B cell (primary cell): ENCODE measurements at regions of chr6 and their contacts with region 1.

Region 1: DNA sequence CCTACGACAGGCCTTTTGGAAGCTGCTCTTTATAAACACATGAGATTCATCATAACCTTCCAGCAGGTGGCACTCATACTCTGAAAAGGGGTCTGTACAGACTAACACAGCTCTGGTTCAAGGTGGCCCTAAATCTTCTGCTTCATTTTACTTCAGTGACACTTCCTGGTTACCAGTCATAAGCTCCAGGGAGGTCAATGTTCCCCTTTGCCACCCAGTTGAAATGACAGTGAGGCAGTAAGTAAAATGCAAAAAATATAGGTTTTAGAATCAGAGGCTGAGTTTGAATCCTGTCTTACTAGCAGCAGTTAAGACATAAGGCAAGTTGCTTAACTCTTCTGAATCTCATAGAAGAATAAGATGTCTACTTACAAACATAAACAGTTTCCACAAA is 132.8 kb downstream of the CDK19 start:
- DNase-seq: peak; percentile 89
- ATAC-seq: peak; percentile 97
- H3K4me3 ChIP-seq: no peak overlapping the region
- H3K4me3 Mint-ChIP-seq: no peak overlapping the region
- H3K27ac ChIP-seq: peak overlapping the region in 1 of 2 donors; percentile 15
- H3K27ac Mint-ChIP-seq: peak overlapping the region; percentile 80
- H3K4me1 ChIP-seq: peaks cover 4 to 12% of the 10 kb centered on the region in 2 donors
- H3K4me1 Mint-ChIP-seq: peaks cover 14% of the 10 kb centered on the region
- H3K27me3 ChIP-seq: no peaks in the 10 kb centered on the region
- H3K27me3 Mint-ChIP-seq: no peaks in the 10 kb centered on the region
- CTCF ChIP-seq: peak; percentile 84

Region 2: GRCh38 chr6:110528101-110528929 is 154.1 kb before region 1 on chr6:
- CTCF ChIA-PET with region 1: interaction called, 10 read pairs
- POLR2A ChIA-PET with region 1: no interaction called
- intact Hi-C with region 1: loop called (anchors 1 kb)
- DNase-seq: peak; percentile 74
- ATAC-seq: peak; percentile 47
- H3K4me3 ChIP-seq: no peak overlapping the region
- H3K4me3 Mint-ChIP-seq: no peak overlapping the region
- H3K27ac ChIP-seq: no peak overlapping the region
- H3K27ac Mint-ChIP-seq: no peak overlapping the region
- H3K4me1 ChIP-seq: no peaks in the 10 kb centered on the region
- H3K4me1 Mint-ChIP-seq: no peaks in the 10 kb centered on the region
- H3K27me3 ChIP-seq: peaks cover 0 to 8% (median 0%) of the 10 kb centered on the region in 4 experiments
- H3K27me3 Mint-ChIP-seq: peaks cover 6% of the 10 kb centered on the region
- CTCF ChIP-seq: peak; percentile 91

Region 3: GRCh38 chr6:110649704-110650103 is 32.8 kb before region 1 on chr6:
- CTCF ChIA-PET with region 1: no interaction called
- POLR2A ChIA-PET with region 1: no interaction called
- intact Hi-C with region 1: no loop called
- DNase-seq: no peak
- ATAC-seq: no peak
- H3K4me3 ChIP-seq: no peak overlapping the region
- H3K4me3 Mint-ChIP-seq: no peak overlapping the region
- H3K27ac ChIP-seq: no peak overlapping the region
- H3K27ac Mint-ChIP-seq: no peak overlapping the region
- H3K4me1 ChIP-seq: no peaks in the 10 kb centered on the region
- H3K4me1 Mint-ChIP-seq: no peaks in the 10 kb centered on the region
- H3K27me3 ChIP-seq: no peaks in the 10 kb centered on the region
- H3K27me3 Mint-ChIP-seq: no peaks in the 10 kb centered on the region
- CTCF ChIP-seq: no peak

Region 4: GRCh38 chr6:110815217-110816109 is 133.0 kb after region 1 on chr6 and contains the start of gene CDK19:
- CTCF ChIA-PET with region 1: interaction called, 24 read pairs
- POLR2A ChIA-PET with region 1: no interaction called
- intact Hi-C with region 1: loop called (anchors 1 kb)
- DNase-seq: peak; percentile 99
- ATAC-seq: peak; percentile 76
- H3K4me3 ChIP-seq: peak within 1 kb of the TSS; percentile 83 to 99 (median 93)
- H3K4me3 Mint-ChIP-seq: peak within 1 kb of the TSS; percentile 97
- H3K27ac ChIP-seq: peak within 1 kb of the TSS; percentile 84 to 93
- H3K27ac Mint-ChIP-seq: peak within 1 kb of the TSS; percentile 99
- H3K4me1 ChIP-seq: peaks cover 33 to 34% of the 10 kb centered on the region in 2 donors
- H3K4me1 Mint-ChIP-seq: peaks cover 39% of the 10 kb centered on the region
- H3K27me3 ChIP-seq: no peaks in the 10 kb centered on the region
- H3K27me3 Mint-ChIP-seq: no peaks in the 10 kb centered on the region
- CTCF ChIP-seq: no peak
- total RNA-seq, gene CDK19: 44.8 and 45.3 TPM in 2 replicates

Region 5: GRCh38 chr6:110882271-110882613 is 199.8 kb after region 1 on chr6:
- CTCF ChIA-PET with region 1: interaction called, 95 read pairs
- POLR2A ChIA-PET with region 1: interaction called, 4 read pairs
- intact Hi-C with region 1: loop called (anchors 1 kb)
- DNase-seq: no peak
- ATAC-seq: no peak
- H3K4me3 ChIP-seq: no peak overlapping the region
- H3K4me3 Mint-ChIP-seq: peak overlapping the region; percentile 35
- H3K27ac ChIP-seq: no peak overlapping the region
- H3K27ac Mint-ChIP-seq: peak overlapping the region; percentile 11
- H3K4me1 ChIP-seq: peaks cover 71 to 79% of the 10 kb centered on the region in 2 donors
- H3K4me1 Mint-ChIP-seq: peaks cover 87% of the 10 kb centered on the region
- H3K27me3 ChIP-seq: no peaks in the 10 kb centered on the region
- H3K27me3 Mint-ChIP-seq: no peaks in the 10 kb centered on the region
- CTCF ChIP-seq: no peak

Region 6: DNA sequence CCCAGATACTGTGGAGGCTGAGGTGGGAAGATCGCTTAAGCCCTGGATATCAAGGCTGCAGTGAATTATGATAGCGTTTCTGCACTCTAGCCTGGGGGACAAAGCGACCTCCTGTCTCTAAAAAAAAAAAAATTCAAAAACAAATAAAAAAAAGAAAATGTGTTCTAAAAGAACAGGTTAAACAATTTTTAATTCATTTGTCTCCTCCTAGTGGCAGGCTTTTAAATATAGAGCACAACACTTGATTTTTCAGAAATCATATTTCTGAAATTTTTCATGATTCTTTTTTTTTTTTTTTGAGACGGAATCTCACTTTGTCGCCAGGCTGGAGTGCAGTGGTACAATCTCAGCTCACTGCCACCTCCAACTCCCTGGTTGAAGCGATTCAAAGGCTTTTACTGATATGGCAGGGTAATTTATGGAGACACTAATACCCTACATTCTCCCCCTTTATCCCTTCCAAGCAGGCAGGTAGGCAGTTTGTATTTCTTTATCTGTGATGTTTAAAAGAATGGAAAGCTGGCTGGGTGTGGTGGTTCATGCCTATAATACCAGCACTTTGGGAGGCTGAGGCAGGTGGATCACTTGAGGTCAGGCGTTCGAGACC is 267.3 kb after region 1 on chr6:
- CTCF ChIA-PET with region 1: interaction called, 190 read pairs
- POLR2A ChIA-PET with region 1: no interaction called
- intact Hi-C with region 1: loop called (anchors 1 kb)
- DNase-seq: peak; percentile 57
- ATAC-seq: no peak
- H3K4me3 ChIP-seq: no peak overlapping the region
- H3K4me3 Mint-ChIP-seq: no peak overlapping the region
- H3K27ac ChIP-seq: no peak overlapping the region
- H3K27ac Mint-ChIP-seq: no peak overlapping the region
- H3K4me1 ChIP-seq: no peaks in the 10 kb centered on the region
- H3K4me1 Mint-ChIP-seq: no peaks in the 10 kb centered on the region
- H3K27me3 ChIP-seq: no peaks in the 10 kb centered on the region
- H3K27me3 Mint-ChIP-seq: peaks cover 2% of the 10 kb centered on the region
- CTCF ChIP-seq: peak; percentile 73

Region 7: DNA sequence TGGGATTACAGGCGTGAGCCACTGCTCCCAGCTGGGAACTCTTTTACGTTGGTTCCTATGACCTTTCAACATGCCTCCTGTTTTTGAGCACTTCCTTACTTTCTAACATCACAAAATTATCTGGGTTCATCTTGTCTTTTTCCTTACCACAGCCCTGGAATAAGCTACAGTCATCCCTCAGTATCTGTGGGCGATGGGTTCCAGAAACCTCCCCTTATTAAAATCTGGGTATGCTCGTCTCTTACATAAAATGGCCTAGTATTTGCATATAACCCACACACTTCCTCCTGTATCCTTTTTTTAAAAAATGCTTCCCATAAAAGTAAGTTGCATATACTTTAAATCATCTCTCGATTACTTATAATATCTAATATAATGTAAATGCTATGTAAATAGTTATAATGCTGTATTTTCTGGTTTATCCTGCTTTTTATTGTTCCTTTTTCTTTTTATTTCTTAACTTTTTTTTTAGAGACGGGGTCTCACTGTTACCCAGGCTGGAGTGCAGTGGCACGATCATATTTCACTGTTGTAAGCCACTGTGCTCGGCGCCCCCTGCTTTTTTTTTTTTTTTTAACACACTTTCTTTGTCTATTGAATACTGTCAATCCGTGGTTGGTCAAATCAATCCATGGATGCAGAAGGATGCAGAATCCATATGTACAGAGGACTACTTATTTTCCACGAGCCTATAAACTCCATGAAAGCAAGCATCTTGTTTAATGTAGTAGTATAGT is 308.6 kb after region 1 on chr6:
- CTCF ChIA-PET with region 1: interaction called, 10 read pairs
- POLR2A ChIA-PET with region 1: no interaction called
- intact Hi-C with region 1: no loop called
- DNase-seq: no peak
- ATAC-seq: no peak
- H3K4me3 ChIP-seq: no peak overlapping the region
- H3K4me3 Mint-ChIP-seq: no peak overlapping the region
- H3K27ac ChIP-seq: no peak overlapping the region
- H3K27ac Mint-ChIP-seq: no peak overlapping the region
- H3K4me1 ChIP-seq: peaks cover 0 to 6% of the 10 kb centered on the region in 2 donors
- H3K4me1 Mint-ChIP-seq: peaks cover 8% of the 10 kb centered on the region
- H3K27me3 ChIP-seq: no peaks in the 10 kb centered on the region
- H3K27me3 Mint-ChIP-seq: no peaks in the 10 kb centered on the region
- CTCF ChIP-seq: no peak

Region 8: DNA sequence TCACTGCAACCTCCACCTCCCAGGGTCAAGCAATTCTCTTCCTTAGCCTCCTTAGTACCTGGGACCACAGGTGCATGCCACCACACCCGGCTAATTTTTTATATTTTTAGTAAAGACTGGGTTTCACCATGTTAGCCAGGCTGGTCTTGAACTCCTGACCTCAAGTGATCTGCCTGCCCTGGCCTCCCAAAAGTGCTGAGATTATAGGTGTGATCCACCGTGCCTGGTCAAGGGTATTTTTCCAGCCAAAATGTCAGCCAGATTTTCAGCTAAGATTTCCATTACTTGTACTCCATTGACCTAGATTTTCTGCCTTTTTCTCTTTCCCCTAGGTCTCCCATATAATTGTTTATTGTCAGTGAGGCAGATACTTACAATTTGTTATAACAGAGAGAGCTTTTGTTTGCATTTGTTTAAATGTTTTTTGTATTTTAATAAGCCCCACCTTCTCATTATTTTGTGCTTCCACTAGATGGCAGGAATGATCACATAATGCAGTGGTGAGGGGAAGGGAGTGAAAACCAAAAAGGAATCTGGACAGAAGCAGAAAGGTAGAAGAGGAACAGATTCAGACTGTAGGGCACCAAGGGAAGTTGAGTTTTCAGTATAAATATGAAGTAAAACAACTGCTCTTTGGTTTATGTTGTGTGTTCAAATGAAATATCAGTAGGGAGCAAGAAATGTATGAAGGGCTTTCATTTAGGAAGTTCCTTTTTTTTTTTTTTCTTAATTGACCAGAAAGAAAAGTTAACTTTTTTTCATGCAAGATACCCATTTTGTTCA is 329.1 kb after region 1 on chr6:
- CTCF ChIA-PET with region 1: interaction called, 13 read pairs
- POLR2A ChIA-PET with region 1: no interaction called
- intact Hi-C with region 1: no loop called
- DNase-seq: peak; percentile 56
- ATAC-seq: peak; percentile 56
- H3K4me3 ChIP-seq: no peak overlapping the region
- H3K4me3 Mint-ChIP-seq: no peak overlapping the region
- H3K27ac ChIP-seq: peak overlapping the region in 1 of 2 donors; percentile 44
- H3K27ac Mint-ChIP-seq: no peak overlapping the region
- H3K4me1 ChIP-seq: peaks cover 0 to 2% of the 10 kb centered on the region in 2 donors
- H3K4me1 Mint-ChIP-seq: peaks cover 4% of the 10 kb centered on the region
- H3K27me3 ChIP-seq: no peaks in the 10 kb centered on the region
- H3K27me3 Mint-ChIP-seq: no peaks in the 10 kb centered on the region
- CTCF ChIP-seq: peak; percentile 75

Region 9: DNA sequence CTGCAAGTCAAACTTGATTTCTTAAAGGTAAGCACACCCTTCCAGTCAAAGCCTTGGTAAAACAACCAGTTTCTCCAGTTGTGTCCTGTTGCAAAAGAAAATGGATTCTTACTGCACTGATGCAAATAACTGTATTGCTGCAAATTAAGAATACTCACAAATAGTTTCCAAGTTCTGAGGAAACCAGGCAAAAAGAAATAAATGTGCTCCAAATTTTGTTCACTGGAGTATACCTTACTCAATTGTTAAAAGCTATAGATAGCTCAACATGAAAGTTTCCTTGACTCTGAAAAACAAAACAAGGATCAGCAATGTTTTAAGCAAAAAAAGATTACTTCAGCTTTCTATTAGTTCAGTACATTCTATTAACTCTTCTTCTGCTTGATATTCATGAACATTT is 480.0 kb after region 1 on chr6:
- CTCF ChIA-PET with region 1: no interaction called
- POLR2A ChIA-PET with region 1: no interaction called
- intact Hi-C with region 1: no loop called
- DNase-seq: peak; percentile 23
- ATAC-seq: no peak
- H3K4me3 ChIP-seq: no peak overlapping the region
- H3K4me3 Mint-ChIP-seq: no peak overlapping the region
- H3K27ac ChIP-seq: no peak overlapping the region
- H3K27ac Mint-ChIP-seq: no peak overlapping the region
- H3K4me1 ChIP-seq: no peaks in the 10 kb centered on the region
- H3K4me1 Mint-ChIP-seq: no peaks in the 10 kb centered on the region
- H3K27me3 ChIP-seq: no peaks in the 10 kb centered on the region
- H3K27me3 Mint-ChIP-seq: peaks cover 4% of the 10 kb centered on the region
- CTCF ChIP-seq: no peak